ENCODE measurements at regions of chr14 and their contacts with region 1.

Region 1: GRCh38 chr14:104677512-104678332 is 11.7 kb upstream of the INF2 start:
- DNase-seq: peak; percentile 49 to 82 (median 60)
- H3K4me3 ChIP-seq: peak overlapping the region; percentile 57 to 63
- H3K4me3 Mint-ChIP-seq: peak overlapping the region; percentile 76 to 87 (median 81)
- H3K27ac ChIP-seq: peak overlapping the region; percentile 27
- H3K27ac Mint-ChIP-seq: peak overlapping the region in 6 of 7 donors; percentile 64 to 83 (median 74)
- H3K4me1 ChIP-seq: peaks cover 16% of the 10 kb centered on the region
- H3K4me1 Mint-ChIP-seq: peaks cover 0 to 16% (median 4%) of the 10 kb centered on the region in 4 donors
- H3K27me3 ChIP-seq: no peaks in the 10 kb centered on the region
- H3K27me3 Mint-ChIP-seq: peaks cover 0 to 2% of the 10 kb centered on the region in 2 donors

Region 2: GRCh38 chr14:104689109-104689880 is 11.6 kb after region 1 on chr14 and contains the start of gene INF2:
- CTCF ChIA-PET with region 1: interaction called, 4 read pairs
- POLR2A ChIA-PET with region 1: interaction called, 56 read pairs
- intact Hi-C with region 1: loop called (anchors 1 kb)
- DNase-seq: peak; percentile 35 to 57 (median 45)
- H3K4me3 ChIP-seq: peak within 1 kb of the TSS; percentile 54 to 57
- H3K4me3 Mint-ChIP-seq: peak within 1 kb of the TSS; percentile 54 to 84 (median 82)
- H3K27ac ChIP-seq: peak within 1 kb of the TSS; percentile 59
- H3K27ac Mint-ChIP-seq: peak within 1 kb of the TSS in 6 of 7 donors; percentile 26 to 66 (median 44)
- H3K4me1 ChIP-seq: peaks cover 79% of the 10 kb centered on the region
- H3K4me1 Mint-ChIP-seq: peaks cover 29 to 68% (median 48%) of the 10 kb centered on the region in 4 donors
- H3K27me3 ChIP-seq: no peaks in the 10 kb centered on the region
- H3K27me3 Mint-ChIP-seq: no peaks in the 10 kb centered on the region
- total RNA-seq, gene INF2: 93.1 to 96.8 TPM

Region 3: GRCh38 chr14:104694991-104695659 is 17.4 kb after region 1 on chr14:
- CTCF ChIA-PET with region 1: interaction called, 4 read pairs
- POLR2A ChIA-PET with region 1: interaction called, 56 read pairs
- intact Hi-C with region 1: loop called (anchors 2 kb)
- DNase-seq: peak; percentile 36 to 82 (median 66)
- H3K4me3 ChIP-seq: peak overlapping the region in 1 of 2 donors; percentile 44
- H3K4me3 Mint-ChIP-seq: peak overlapping the region; percentile 48 to 82 (median 71)
- H3K27ac ChIP-seq: peak overlapping the region; percentile 62
- H3K27ac Mint-ChIP-seq: peak overlapping the region; percentile 83 to 97 (median 91)
- H3K4me1 ChIP-seq: peaks cover 62% of the 10 kb centered on the region
- H3K4me1 Mint-ChIP-seq: peaks cover 19 to 50% (median 37%) of the 10 kb centered on the region in 4 donors
- H3K27me3 ChIP-seq: no peaks in the 10 kb centered on the region
- H3K27me3 Mint-ChIP-seq: no peaks in the 10 kb centered on the region